Right ventricle myocardium inferior (tissue), 1 donor: ENCODE measurements at regions of chr17 and their contacts with region 1.

Region 1: DNA sequence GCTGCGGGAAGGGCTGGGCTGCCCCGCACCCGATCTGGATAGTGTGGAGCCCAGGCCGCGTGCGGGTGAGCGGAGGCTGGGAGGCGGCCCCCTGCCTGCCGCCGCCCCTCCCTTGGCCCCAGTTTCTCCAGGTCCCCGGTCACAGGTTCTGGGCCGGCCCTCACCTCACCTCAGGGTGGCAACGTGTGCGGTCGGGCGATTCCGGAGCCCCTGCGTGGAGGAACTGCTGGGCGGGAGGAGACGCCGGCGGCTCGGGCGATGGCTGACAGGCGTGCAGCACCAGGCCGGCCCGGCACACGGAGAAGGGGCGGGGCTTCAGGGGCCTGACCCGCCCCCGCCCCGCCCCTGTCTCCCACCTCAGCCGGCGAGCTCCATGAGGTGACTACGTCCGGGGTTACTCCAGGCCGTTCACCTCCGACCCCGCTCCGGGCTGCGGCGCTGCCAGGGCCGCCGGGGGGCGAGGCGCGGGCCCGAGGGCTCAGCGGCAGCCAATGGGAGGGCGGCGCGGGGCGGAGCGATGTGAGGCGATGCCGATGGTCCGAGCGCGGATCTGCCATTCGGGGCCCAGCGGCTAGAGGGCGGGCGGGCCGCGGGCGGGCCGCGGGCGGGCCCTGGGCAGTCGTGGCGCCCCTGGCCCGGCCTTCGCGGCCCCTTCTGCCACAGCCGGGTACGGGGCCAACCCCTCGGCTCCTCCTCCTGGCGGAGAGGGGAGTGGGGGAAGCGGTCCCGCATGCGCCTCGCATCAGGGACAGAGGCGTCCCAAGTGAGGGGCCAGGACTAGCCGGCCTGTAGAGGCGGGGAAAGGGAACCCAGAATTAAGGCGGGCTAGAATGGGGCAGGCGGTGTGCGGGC is 16.7 kb upstream of the C17orf78 start:
- DNase-seq: peak; percentile 97
- ATAC-seq: peak; percentile 98

Region 2: GRCh38 chr17:36948717-36949460 is 410.2 kb before region 1 on chr17 and contains the start of gene AATF:
- intact Hi-C with region 1: loop called (anchors 5 kb)
- DNase-seq: peak; percentile 98
- ATAC-seq: peak; percentile 100
- total RNA-seq, gene AATF: 23.9 TPM

Region 3: DNA sequence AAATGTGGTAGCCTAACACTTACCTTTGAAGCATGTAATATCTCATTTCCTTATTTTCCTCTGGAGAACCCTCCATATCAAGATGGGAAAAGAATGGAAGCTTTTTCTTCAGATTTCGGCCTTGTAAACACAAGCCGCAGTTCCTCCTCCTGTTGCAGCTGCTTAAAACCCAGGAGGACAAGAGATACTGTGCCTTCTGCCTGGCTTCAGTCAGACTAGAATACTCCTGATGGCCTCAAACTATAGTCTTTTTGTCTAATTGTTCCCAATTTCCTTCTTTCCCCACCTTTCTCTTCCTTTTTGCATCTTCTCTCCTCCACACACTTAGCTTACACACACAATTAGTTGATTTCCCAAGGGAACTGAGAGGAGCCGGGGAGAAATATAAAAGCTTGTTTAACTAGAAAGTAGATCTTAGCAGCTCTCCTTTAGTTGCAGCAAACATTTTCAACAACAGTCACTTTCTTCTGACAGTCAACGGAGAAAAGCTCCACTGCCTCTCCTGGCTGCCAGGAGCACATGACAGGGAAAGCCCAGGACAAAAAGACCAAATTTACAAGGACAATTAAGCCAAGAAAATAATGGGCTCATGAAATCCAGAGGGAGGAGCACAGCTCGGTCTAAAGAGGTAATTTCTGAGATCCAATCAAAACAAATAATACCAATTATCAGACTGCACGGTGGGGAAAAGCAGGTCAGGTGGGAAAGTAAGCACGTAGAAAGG is 59.6 kb before region 1 on chr17:
- intact Hi-C with region 1: loop called (anchors 2 kb)
- DNase-seq: no peak
- ATAC-seq: no peak

Region 4: DNA sequence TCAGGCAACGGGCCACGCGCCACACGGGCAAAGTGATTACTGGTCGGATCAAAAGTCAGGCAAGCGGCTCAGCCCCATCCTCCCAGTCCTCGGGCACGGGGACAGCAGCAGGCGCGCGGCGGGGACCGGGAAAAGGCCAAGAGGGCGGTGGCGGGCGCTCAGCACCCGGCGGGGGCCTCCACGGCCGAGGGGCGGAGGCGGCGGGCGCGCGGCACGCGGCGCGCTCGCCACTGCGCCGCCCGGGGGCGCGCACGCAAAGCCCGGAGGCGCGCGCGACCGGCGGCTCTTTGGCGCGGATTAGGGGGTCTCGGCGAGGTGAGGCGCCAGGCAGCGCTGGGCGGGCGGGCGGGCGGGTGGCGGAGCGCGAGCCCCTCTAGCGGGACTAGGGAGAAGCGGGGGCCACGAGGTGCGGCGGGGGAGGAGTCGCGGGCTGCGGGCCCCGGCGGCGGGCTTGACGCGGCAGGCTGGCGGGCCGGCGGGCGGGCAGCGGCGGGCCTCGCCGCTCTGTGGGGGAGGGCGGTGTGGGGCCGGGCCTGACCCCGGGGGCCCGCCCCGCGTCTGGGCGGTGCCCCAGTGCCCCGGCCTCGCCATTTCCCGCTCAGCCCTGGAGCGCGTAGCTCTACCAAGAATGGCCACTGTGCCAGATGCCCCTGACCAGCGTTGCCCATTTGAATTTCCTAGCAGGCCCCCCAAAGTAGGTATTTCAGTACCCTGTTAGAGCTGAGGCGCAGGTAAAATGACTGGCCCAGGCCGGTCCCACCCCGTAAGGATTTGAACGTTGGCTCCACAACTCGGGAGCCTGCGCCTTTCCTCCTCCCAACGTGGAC is 47.8 kb after region 1 on chr17 and contains the starts of genes ACACA and TADA2A:
- intact Hi-C with region 1: loop called (anchors 2 kb)
- DNase-seq: peak; percentile 90
- ATAC-seq: peak; percentile 98
- total RNA-seq, gene ACACA: 13.3 TPM
- total RNA-seq, gene TADA2A: 11.3 TPM

Region 5: GRCh38 chr17:37489197-37490001 is 130.3 kb after region 1 on chr17 and contains the start of gene DUSP14:
- intact Hi-C with region 1: loop called (anchors 5 kb)
- DNase-seq: peak; percentile 86
- ATAC-seq: peak; percentile 92
- total RNA-seq, gene DUSP14: 21.5 TPM